ENCODE measurements at regions of chr6 and their contacts with region 1.

Region 1: DNA sequence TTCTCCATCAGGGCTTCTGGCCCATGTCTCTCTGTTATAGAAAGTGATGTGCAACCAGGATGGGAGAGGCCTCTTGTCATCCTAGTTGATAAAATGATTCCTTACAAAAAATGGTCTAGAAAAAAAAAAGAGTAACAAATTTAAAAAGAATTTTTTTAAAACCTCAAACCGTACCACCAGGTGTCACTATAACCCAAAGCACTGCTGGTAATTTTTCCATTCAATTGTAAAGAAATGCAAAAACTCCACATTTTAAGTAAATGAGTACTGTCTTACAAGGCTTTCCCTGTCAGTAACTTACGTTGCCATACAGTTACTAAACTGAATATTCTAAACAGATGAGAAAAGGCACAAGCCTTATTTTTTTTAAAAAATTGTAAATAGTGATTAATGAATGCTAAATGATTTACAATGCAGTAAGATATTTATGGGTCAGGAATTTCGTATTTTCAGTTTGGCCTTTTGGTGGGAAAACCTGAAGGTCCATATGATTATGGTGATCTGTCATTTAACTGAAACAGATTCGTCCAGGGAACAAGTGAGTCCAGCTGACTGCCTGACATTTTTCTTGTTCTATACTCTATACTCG is 95.4 kb downstream of the OGFRL1 start:
- DNase-seq: peak; percentile 21
- H3K4me3 Mint-ChIP-seq: no peak overlapping the region
- H3K27ac Mint-ChIP-seq: no peak overlapping the region
- H3K4me1 Mint-ChIP-seq: no peaks in the 10 kb centered on the region
- H3K27me3 Mint-ChIP-seq: peaks cover 10% of the 10 kb centered on the region

Region 2: GRCh38 chr6:71211799-71212198 is 172.2 kb before region 1 on chr6:
- CTCF ChIA-PET with region 1: no interaction called
- intact Hi-C with region 1: no loop called
- DNase-seq: no peak
- H3K4me3 Mint-ChIP-seq: no peak overlapping the region
- H3K27ac Mint-ChIP-seq: no peak overlapping the region
- H3K4me1 Mint-ChIP-seq: no peaks in the 10 kb centered on the region
- H3K27me3 Mint-ChIP-seq: no peaks in the 10 kb centered on the region

Region 3: DNA sequence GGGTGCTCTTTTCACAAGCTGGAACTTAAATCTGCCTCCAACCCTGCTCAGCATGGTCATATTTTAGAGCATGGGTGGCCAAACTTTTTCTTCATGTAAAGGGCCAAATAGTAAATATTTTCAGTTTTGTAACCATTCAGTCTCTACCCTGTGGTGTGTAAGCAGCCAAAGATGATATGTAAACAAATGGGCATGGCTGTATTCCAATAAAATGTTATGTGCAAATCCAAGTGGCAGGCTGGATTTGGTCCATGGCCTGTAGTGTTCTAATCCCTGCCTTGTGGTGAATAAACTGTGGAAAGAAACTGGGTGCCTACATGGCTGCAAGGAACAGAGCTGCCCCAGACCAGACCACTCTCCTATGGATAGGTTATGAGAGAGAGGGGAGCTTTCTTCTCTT is 62.7 kb before region 1 on chr6:
- CTCF ChIA-PET with region 1: no interaction called
- intact Hi-C with region 1: no loop called
- DNase-seq: no peak
- H3K4me3 Mint-ChIP-seq: no peak overlapping the region
- H3K27ac Mint-ChIP-seq: no peak overlapping the region
- H3K4me1 Mint-ChIP-seq: no peaks in the 10 kb centered on the region
- H3K27me3 Mint-ChIP-seq: no peaks in the 10 kb centered on the region

Region 4: GRCh38 chr6:71510057-71510713 is 126.2 kb after region 1 on chr6:
- CTCF ChIA-PET with region 1: interaction called, 3 read pairs
- intact Hi-C with region 1: loop called (anchors 1 kb)
- DNase-seq: peak; percentile 9
- H3K4me3 Mint-ChIP-seq: no peak overlapping the region
- H3K27ac Mint-ChIP-seq: no peak overlapping the region
- H3K4me1 Mint-ChIP-seq: no peaks in the 10 kb centered on the region
- H3K27me3 Mint-ChIP-seq: peaks cover 4% of the 10 kb centered on the region

Region 5: DNA sequence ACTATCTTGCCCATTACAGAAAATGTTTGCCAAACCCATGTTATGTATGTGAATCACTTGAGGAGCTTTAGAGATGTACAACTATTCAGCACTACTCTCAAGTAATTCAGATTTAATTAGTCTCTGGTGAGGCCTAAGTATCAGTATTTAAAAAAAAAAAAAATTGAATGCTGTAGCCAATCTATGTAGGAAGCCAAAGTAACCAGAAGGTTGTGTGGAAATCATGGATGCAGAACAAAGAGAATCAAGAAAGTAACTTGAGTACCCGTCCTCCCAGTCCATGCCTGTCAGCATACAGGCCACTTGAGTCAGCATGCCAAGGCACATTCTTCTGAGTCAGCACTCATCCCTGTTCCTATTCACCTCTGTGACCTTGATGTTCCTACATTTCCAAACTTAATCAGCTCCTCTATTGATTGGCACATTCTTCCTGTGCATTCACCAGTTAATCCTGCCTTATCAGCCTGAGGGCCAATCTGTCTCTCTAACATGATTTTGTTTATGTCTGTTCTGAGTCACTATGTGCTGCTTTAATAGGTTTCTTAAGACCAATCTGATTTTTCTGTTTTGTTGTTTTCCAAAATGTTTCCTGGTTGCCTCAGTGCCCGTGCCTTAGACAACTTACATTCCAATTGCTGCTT is 1403.5 kb after region 1 on chr6:
- CTCF ChIA-PET with region 1: no interaction called
- intact Hi-C with region 1: no loop called
- DNase-seq: no peak
- H3K4me3 Mint-ChIP-seq: no peak overlapping the region
- H3K27ac Mint-ChIP-seq: no peak overlapping the region
- H3K4me1 Mint-ChIP-seq: peaks cover 10% of the 10 kb centered on the region
- H3K27me3 Mint-ChIP-seq: no peaks in the 10 kb centered on the region

Measured in activated naive CD4-positive, alpha-beta T cell treated with anti-CD3 and anti-CD28 coated beads for 36 hours (primary cell).